ENCODE measurements at regions of chr4 and their contacts with region 1.

Region 1: GRCh38 chr4:174318829-174319764 is 35.4 kb downstream of the CEP44 start:
- DNase-seq: peak; percentile 45
- ATAC-seq: no peak
- H3K4me3 ChIP-seq: no peak overlapping the region
- H3K27ac ChIP-seq: no peak overlapping the region
- H3K4me1 ChIP-seq: peaks cover 17% of the 10 kb centered on the region
- H3K27me3 ChIP-seq: no peaks in the 10 kb centered on the region
- CTCF ChIP-seq: peak; percentile 81

Region 2: DNA sequence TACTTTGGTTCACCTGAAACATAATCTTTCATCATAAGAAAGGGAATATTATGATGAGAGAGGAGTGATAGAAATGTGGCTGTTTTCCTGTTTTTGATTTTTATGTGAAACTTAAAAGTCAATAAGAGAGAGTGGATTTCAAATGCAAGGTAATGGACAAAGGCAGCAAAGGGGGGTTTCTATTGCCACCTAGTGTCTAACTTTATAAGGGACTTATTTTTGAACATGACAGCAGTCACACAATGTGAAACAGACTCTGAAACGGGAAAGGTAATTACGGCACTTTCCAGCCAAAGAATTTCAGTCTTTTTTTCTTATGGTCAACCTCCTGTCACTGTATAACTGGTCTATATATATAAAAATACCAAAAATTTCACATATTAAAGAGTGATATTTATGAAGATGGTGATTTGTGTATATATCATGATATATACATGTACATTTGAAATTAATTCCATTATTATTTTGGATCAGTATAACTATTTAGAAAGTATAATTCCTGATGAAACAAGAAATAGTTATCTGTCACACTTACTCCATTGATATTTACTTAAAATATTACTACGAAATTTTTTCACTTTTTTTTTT is 162.8 kb before region 1 on chr4:
- CTCF ChIA-PET with region 1: interaction called, 4 read pairs
- POLR2A ChIA-PET with region 1: no interaction called
- intact Hi-C with region 1: loop called (anchors 5 kb)
- DNase-seq: peak; percentile 49
- ATAC-seq: peak; percentile 68
- H3K4me3 ChIP-seq: no peak overlapping the region
- H3K27ac ChIP-seq: no peak overlapping the region
- H3K4me1 ChIP-seq: no peaks in the 10 kb centered on the region
- H3K27me3 ChIP-seq: peaks cover 18% of the 10 kb centered on the region
- CTCF ChIP-seq: peak; percentile 65

Region 3: GRCh38 chr4:174222266-174222872 is 96.7 kb before region 1 on chr4:
- CTCF ChIA-PET with region 1: interaction called, 3 read pairs
- POLR2A ChIA-PET with region 1: no interaction called
- intact Hi-C with region 1: loop called (anchors 1 kb)
- DNase-seq: peak; percentile 63
- ATAC-seq: peak; percentile 46; the same call in 1 of the 2 replicates
- H3K4me3 ChIP-seq: no peak overlapping the region
- H3K27ac ChIP-seq: no peak overlapping the region
- H3K4me1 ChIP-seq: no peaks in the 10 kb centered on the region
- H3K27me3 ChIP-seq: no peaks in the 10 kb centered on the region
- CTCF ChIP-seq: peak; percentile 76

Region 4: DNA sequence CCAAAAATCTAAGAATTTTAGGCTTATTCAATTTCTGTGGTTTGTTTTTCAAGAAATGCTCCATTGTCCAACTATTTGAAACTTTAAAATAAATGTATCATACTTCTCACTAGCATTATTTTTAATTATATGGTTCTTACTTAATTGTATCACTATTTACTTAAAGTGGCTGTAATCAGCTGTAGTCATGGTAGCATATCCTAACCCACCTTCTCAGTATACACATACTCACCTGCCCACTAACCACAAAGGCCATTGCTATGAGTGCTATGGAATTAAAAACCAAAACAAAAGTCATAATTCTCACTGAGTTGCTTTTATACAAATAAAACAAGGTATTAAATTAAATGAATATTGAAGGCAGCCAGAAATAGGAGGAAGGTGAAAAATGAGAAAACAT is 40.6 kb before region 1 on chr4:
- CTCF ChIA-PET with region 1: no interaction called
- POLR2A ChIA-PET with region 1: no interaction called
- intact Hi-C with region 1: loop called (anchors 5 kb)
- DNase-seq: peak; percentile 6
- ATAC-seq: no peak
- H3K4me3 ChIP-seq: no peak overlapping the region
- H3K27ac ChIP-seq: no peak overlapping the region
- H3K4me1 ChIP-seq: peaks cover 15% of the 10 kb centered on the region; the same call in 1 of the 2 replicates
- H3K27me3 ChIP-seq: no peaks in the 10 kb centered on the region
- CTCF ChIP-seq: no peak